HCT116 (cell line): ENCODE measurements at regions of chr1 and their contacts with region 1.

Region 1: DNA sequence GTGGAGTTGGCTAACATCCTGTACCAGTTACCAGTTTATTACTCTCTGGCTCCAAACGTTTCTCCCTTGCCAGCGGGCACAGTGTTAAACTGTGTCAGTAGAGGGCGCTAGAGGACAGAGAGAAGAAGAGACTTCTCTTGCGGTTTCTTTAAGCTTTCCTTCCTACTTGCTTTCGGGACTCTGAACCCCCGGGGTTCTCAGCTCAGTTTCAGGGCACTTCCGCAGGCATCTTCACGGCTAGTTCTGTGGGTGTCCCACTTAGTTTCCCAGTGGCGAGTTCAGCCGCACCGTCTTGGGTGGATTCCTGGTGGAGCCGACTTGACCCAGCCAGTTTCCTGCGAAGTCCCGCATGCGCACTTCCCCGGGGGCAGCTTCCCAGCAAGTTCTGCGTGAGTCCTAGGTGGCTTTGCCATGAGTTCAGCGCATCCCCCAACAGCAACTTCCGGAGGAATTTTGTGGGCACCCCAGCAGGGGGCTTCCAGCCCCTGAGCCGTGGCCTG is 37.9 kb upstream of the BTG2 start:
- DNase-seq: peak; percentile 77
- ATAC-seq: peak; percentile 70
- H3K4me3 ChIP-seq: peak overlapping the region; percentile 39 to 46
- H3K27ac ChIP-seq: peak overlapping the region; percentile 49
- H3K4me1 ChIP-seq: peaks cover 0 to 20% of the 10 kb centered on the region in 2 experiments; a peak in 2 of 4 replicates
- H3K27me3 ChIP-seq: no peaks in the 10 kb centered on the region
- CTCF ChIP-seq: peak; percentile 87 to 93 (median 90)
- POLR2A ChIP-seq: peak; percentile 30
- RAD21 ChIP-seq: peak; percentile 82

Region 2: DNA sequence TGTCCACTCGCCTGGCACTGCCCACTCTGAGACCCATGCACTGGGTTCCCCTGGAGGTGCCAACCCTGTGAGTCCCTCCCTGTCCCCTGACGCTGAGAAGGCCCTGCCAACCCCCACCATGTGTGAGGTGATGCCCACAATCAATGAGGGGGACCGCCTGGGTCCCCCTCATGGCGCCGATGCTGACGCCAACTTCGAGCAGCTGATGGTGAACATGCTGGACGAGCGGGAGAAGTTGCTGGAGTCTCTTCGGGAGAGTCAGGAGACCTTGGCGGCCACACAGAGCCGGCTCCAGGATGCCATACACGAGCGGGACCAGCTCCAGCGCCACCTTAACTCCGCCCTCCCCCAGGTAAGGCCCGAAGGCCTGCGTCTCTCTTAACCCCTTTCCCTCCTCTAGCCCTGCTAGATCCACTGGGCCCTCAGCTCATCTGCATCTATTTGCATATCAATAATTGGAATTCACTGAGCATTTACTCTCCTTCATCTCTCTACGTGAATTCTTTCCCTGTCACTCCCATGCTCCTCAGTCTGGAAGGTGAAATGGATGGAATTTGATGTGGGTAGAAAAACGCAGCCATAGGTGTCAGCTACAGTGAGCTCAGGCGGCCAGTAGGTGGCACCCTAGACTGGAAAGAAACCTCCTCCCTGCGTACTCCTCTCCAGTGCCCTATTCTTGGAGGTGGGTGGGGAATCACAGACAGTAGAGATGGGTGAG is 228.3 kb before region 1 on chr1:
- CTCF ChIA-PET with region 1: interaction called, 185 read pairs
- POLR2A ChIA-PET with region 1: interaction called, 10 read pairs
- RAD21 ChIA-PET with region 1: interaction called, 8 to 16 read pairs
- intact Hi-C with region 1: loop called (anchors 1 kb)
- DNase-seq: no peak
- ATAC-seq: peak; percentile 92
- H3K4me3 ChIP-seq: no peak overlapping the region
- H3K27ac ChIP-seq: no peak overlapping the region
- H3K4me1 ChIP-seq: peaks cover 0 to 22% of the 10 kb centered on the region in 2 experiments; a peak in 2 of 4 replicates
- H3K27me3 ChIP-seq: no peaks in the 10 kb centered on the region
- CTCF ChIP-seq: peak; percentile 83 to 97 (median 92)
- POLR2A ChIP-seq: no peak
- RAD21 ChIP-seq: peak; percentile 89

Region 3: DNA sequence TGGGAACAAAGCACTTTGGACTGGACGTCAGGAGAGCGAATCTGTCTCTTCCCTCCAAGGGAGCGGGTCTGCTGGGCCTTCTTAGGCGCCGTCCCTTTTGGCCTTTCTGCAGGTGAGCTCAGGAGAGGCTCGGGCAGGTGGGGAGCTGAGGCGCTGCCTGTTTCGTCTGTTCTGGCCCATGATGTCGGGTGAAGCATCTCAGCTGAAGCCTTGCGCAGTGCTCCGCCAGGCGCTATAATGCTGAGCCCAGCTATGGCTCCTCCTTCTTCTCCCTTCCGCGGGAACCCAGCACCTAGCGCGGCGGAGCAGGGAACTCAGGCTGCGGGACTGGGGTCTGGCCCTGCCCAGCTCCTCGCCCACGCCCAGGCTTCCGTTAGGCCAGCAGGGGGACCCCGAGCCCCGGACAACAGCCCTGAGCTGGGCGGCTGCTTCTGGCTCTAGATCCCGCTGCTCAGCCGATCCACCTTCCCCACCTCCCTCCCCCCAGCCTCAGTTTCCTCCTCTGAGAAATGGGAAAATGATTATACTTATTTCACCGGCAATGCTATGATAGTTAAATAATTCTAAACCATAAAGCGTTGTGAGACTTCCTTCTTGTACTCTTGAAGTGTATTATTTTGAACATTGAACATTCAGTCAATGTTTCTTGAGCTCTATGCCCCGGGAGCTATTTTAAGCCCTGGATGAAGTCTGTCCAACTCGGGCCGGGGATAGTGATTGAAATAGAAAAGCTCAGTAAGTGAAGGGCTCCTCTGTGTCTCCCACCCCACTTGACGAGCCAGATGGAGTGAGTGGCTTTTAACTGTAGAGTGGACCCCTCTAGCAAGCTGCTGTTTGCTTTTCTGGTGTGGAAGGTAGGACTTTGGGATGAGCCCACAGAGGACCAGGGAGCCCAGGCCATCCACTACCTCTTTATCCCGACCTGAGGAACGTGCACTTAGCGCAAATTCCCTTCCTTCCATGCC is 149.5 kb before region 1 on chr1:
- CTCF ChIA-PET with region 1: interaction called, 58 read pairs
- POLR2A ChIA-PET with region 1: no interaction called
- RAD21 ChIA-PET with region 1: interaction called, 6 to 7 read pairs
- intact Hi-C with region 1: loop called (anchors 1 kb)
- DNase-seq: peak; percentile 52
- ATAC-seq: peak; percentile 100
- H3K4me3 ChIP-seq: no peak overlapping the region
- H3K27ac ChIP-seq: no peak overlapping the region
- H3K4me1 ChIP-seq: peaks cover 0 to 10% of the 10 kb centered on the region in 2 experiments; a peak in 1 of 4 replicates
- H3K27me3 ChIP-seq: peaks cover 21% of the 10 kb centered on the region; the same call in 1 of the 2 replicates
- CTCF ChIP-seq: peak; percentile 79 to 87 (median 80)
- POLR2A ChIP-seq: no peak
- RAD21 ChIP-seq: peak; percentile 95

Region 4: GRCh38 chr1:203244776-203245175 is 22.6 kb before region 1 on chr1:
- CTCF ChIA-PET with region 1: interaction called, 13 read pairs
- POLR2A ChIA-PET with region 1: no interaction called
- RAD21 ChIA-PET with region 1: no interaction called
- intact Hi-C with region 1: no loop called
- DNase-seq: no peak
- ATAC-seq: no peak
- H3K4me3 ChIP-seq: no peak overlapping the region
- H3K27ac ChIP-seq: no peak overlapping the region
- H3K4me1 ChIP-seq: no peaks in the 10 kb centered on the region
- H3K27me3 ChIP-seq: no peaks in the 10 kb centered on the region
- CTCF ChIP-seq: no peak
- POLR2A ChIP-seq: no peak
- RAD21 ChIP-seq: no peak

Region 5: DNA sequence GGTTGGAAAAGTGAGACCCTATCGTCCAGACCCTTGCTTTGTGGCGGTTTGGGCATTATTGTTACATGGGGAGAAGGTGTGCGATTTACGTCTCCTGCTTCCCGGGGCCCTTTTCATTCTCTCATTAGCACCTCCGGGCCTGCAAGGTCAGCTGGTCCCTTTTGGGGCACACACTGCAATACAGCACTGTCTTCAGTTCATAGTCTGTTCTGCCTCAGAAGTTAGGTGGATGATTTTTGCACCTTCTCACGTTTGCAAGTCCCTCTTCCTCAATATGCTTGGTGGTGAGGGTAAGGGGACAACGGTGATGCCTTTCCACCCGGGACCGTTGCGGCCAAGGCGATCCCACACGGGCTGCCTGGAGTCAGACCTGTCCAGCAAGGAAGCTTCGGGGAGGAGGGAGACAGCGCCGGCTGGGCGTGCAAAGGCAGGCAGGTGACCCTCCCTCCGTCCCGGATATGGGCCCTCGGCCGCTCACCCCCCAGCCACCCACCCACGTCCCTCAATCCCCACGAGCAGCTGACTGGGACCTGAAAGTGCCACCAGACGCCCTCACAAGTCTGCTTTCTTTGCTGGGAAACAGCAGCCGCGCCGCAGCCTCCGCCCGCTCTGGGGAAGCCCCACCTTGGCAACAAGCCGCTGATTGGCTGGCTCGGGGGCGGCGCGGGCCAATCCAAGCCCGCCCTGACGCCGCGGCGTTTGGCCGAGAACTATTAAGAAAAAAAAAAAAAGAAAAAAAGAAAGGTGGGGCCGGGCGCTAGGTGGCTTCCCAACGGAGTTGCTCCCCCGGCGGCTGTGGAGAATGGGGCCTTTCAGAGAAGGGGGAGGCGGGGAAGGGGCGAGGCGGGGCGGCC is 59.7 kb after region 1 on chr1:
- CTCF ChIA-PET with region 1: interaction called, 10 read pairs
- POLR2A ChIA-PET with region 1: no interaction called
- RAD21 ChIA-PET with region 1: no interaction called
- intact Hi-C with region 1: no loop called
- DNase-seq: peak; percentile 75
- ATAC-seq: peak; percentile 93
- H3K4me3 ChIP-seq: peak overlapping the region; percentile 58 to 68
- H3K27ac ChIP-seq: peak overlapping the region; percentile 79
- H3K4me1 ChIP-seq: peaks cover 11 to 18% of the 10 kb centered on the region in 2 experiments; a peak in 3 of 4 replicates
- H3K27me3 ChIP-seq: peaks cover 9% of the 10 kb centered on the region; the same call in 1 of the 2 replicates
- CTCF ChIP-seq: no peak
- POLR2A ChIP-seq: no peak
- RAD21 ChIP-seq: no peak